GM12878 (cell line): ENCODE measurements at regions of chr3 and their contacts with region 1.

Region 1: GRCh38 chr3:192042116-192042515 is 581.2 kb downstream of the PYDC2 start:
- DNase-seq: peak; percentile 87
- ATAC-seq: peak; percentile 98
- H3K4me3 ChIP-seq: no peak overlapping the region
- H3K27ac ChIP-seq: peak overlapping the region; percentile 83
- H3K4me1 ChIP-seq: peaks cover 11% of the 10 kb centered on the region; the same call in 1 of the 2 replicates
- H3K27me3 ChIP-seq: no peaks in the 10 kb centered on the region
- CTCF ChIP-seq: no peak
- EP300 ChIP-seq: peak in 1 of 2 experiments; percentile 75; a peak in 3 of 4 replicates
- POLR2A ChIP-seq: no peak
- RAD21 ChIP-seq: no peak

Region 2: DNA sequence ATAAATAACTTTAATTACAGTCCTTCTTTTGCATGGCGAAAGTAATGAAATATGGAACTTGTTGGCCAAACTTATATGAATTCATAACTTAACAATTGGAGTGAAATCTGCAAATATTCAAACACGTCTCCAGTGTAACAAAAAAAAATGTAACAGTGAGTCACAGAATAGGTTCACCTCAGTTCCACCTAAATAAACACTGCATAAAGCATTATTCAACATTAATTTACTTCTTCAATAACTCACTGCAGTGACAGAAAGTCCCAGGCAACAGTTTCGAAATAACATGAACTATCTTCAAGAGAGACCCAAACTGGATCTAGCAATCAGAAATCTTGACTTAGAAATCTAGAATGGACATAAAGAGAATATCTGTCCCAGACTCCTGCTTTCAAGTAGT is 1255.2 kb before region 1 on chr3:
- CTCF ChIA-PET with region 1: no interaction called
- POLR2A ChIA-PET with region 1: no interaction called
- RAD21 ChIA-PET with region 1: no interaction called
- SMC1A ChIA-PET with region 1: no interaction called
- in situ Hi-C with region 1: no loop called
- intact Hi-C with region 1: no loop called
- DNase-seq: no peak
- ATAC-seq: no peak
- H3K4me3 ChIP-seq: no peak overlapping the region
- H3K27ac ChIP-seq: no peak overlapping the region
- H3K4me1 ChIP-seq: no peaks in the 10 kb centered on the region
- H3K27me3 ChIP-seq: no peaks in the 10 kb centered on the region
- CTCF ChIP-seq: no peak
- EP300 ChIP-seq: no peak
- POLR2A ChIP-seq: no peak
- RAD21 ChIP-seq: no peak

Region 3: DNA sequence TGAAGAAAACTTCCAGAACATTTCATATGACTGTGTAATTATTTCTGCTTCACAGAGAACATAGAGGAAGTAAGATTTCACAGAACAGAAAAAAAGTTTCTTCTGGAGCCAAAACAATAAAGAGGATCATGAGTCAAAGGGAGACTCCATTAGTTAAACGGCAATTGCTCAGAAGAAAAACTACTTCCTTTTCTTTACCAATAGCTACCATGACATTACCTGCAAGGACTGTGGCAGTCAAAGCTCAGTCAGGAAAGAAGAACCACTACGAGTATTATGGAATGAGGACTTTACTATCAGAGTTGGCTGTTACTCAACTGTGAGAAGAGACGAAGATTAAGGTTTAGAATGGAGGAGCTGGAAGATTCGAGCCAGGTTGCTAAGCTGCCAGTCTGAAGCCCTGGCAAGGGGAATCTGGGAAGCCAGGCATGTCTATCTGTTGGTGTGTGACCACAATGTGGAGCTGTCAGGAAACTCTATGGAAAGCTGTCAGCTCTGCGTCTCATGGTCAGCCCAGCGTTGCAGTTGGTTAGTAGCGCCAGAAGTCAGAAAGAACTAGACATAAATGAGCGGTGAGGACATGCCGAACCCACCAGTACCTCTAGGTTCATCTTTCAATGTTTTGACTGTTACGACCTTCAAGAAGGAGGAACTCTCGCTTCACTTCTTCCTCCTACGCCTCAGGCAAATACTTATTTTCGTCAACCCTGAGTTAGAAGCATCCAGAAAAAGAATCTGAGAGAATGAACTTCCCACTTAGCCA is 80.9 kb after region 1 on chr3:
- CTCF ChIA-PET with region 1: interaction called, 3 read pairs
- POLR2A ChIA-PET with region 1: no interaction called
- RAD21 ChIA-PET with region 1: interaction called, 10 read pairs
- SMC1A ChIA-PET with region 1: interaction called, 4 read pairs
- in situ Hi-C with region 1: no loop called
- intact Hi-C with region 1: loop called (anchors 5 kb)
- DNase-seq: peak; percentile 53
- ATAC-seq: peak; percentile 90
- H3K4me3 ChIP-seq: peak overlapping the region; percentile 30; the same call in 1 of the 2 replicates
- H3K27ac ChIP-seq: peak overlapping the region; percentile 61
- H3K4me1 ChIP-seq: peaks cover 8% of the 10 kb centered on the region
- H3K27me3 ChIP-seq: no peaks in the 10 kb centered on the region
- CTCF ChIP-seq: no peak
- EP300 ChIP-seq: peak; percentile 44 to 61; a peak in 3 of 4 replicates
- POLR2A ChIP-seq: no peak
- RAD21 ChIP-seq: no peak

Region 4: GRCh38 chr3:192130534-192131132 is 88.5 kb after region 1 on chr3:
- CTCF ChIA-PET with region 1: interaction called, 3 read pairs
- POLR2A ChIA-PET with region 1: no interaction called
- RAD21 ChIA-PET with region 1: interaction called, 10 read pairs
- SMC1A ChIA-PET with region 1: interaction called, 3 read pairs
- in situ Hi-C with region 1: no loop called
- intact Hi-C with region 1: no loop called
- DNase-seq: peak; percentile 13
- ATAC-seq: peak; percentile 76
- H3K4me3 ChIP-seq: no peak overlapping the region
- H3K27ac ChIP-seq: no peak overlapping the region
- H3K4me1 ChIP-seq: no peaks in the 10 kb centered on the region; the same call in 1 of the 2 replicates
- H3K27me3 ChIP-seq: no peaks in the 10 kb centered on the region
- CTCF ChIP-seq: peak; percentile 54 to 76 (median 63)
- EP300 ChIP-seq: no peak
- POLR2A ChIP-seq: no peak
- RAD21 ChIP-seq: peak; percentile 44